ENCODE measurements at regions of chr10 and their contacts with region 1.

Region 1: DNA sequence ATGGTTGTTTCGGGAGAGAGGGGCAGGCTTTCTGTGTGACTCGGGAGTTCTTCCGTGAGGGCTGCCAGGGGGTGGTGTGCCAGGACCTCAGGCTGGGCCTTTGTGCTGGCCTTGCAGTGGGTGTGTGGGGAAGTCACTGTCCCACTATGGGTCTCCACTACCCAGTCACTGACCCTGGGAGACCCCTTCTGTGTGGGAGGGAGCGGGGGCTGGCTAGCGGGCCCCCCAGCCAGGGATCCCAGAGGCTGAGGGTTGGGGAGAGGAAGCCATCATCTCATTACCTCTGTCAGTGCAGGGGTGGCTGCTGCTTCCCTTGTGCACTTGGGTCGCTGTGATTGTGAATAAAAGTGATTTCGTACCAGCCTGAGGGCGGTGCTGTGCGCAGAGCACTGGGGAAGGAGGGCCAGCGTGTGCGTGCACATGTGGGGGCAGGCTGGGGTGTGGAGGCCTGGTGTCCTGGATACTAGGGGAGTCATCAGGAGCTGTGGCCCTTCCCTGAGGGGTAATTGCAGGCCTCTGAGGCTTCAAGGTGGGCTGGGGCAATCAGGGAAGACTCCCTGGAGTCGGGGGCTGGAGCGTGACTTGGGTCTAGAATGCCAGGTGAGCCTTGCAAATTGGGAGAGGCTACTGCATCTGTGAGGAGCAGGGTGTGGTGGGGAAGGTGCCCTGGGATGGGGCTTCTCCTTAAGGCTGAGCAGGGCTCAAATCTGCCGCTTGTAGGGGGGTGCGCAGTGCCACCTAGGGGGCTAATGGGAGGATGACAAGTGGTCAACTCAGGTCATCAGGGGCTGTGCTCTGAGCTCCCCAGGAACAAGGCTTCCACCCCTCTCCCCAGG is 98.9 kb downstream of the NEURL1 start:
- DNase-seq: peak; percentile 57
- ATAC-seq: peak; percentile 77
- H3K4me3 ChIP-seq: no peak overlapping the region
- H3K4me3 Mint-ChIP-seq: no peak overlapping the region
- H3K27ac ChIP-seq: no peak overlapping the region
- H3K27ac Mint-ChIP-seq: no peak overlapping the region
- H3K4me1 ChIP-seq: no peaks in the 10 kb centered on the region
- H3K4me1 Mint-ChIP-seq: no peaks in the 10 kb centered on the region
- H3K27me3 ChIP-seq: no peaks in the 10 kb centered on the region
- H3K27me3 Mint-ChIP-seq: no peaks in the 10 kb centered on the region
- CTCF ChIP-seq: peak; percentile 73

Region 2: GRCh38 chr10:103353281-103353680 is 239.1 kb before region 1 on chr10:
- CTCF ChIA-PET with region 1: no interaction called
- POLR2A ChIA-PET with region 1: no interaction called
- intact Hi-C with region 1: no loop called
- DNase-seq: no peak
- ATAC-seq: no peak
- H3K4me3 ChIP-seq: no peak overlapping the region
- H3K4me3 Mint-ChIP-seq: no peak overlapping the region
- H3K27ac ChIP-seq: no peak overlapping the region
- H3K27ac Mint-ChIP-seq: no peak overlapping the region
- H3K4me1 ChIP-seq: peaks cover 9 to 13% of the 10 kb centered on the region in 2 donors
- H3K4me1 Mint-ChIP-seq: peaks cover 6% of the 10 kb centered on the region
- H3K27me3 ChIP-seq: no peaks in the 10 kb centered on the region
- H3K27me3 Mint-ChIP-seq: no peaks in the 10 kb centered on the region
- CTCF ChIP-seq: no peak

Region 3: DNA sequence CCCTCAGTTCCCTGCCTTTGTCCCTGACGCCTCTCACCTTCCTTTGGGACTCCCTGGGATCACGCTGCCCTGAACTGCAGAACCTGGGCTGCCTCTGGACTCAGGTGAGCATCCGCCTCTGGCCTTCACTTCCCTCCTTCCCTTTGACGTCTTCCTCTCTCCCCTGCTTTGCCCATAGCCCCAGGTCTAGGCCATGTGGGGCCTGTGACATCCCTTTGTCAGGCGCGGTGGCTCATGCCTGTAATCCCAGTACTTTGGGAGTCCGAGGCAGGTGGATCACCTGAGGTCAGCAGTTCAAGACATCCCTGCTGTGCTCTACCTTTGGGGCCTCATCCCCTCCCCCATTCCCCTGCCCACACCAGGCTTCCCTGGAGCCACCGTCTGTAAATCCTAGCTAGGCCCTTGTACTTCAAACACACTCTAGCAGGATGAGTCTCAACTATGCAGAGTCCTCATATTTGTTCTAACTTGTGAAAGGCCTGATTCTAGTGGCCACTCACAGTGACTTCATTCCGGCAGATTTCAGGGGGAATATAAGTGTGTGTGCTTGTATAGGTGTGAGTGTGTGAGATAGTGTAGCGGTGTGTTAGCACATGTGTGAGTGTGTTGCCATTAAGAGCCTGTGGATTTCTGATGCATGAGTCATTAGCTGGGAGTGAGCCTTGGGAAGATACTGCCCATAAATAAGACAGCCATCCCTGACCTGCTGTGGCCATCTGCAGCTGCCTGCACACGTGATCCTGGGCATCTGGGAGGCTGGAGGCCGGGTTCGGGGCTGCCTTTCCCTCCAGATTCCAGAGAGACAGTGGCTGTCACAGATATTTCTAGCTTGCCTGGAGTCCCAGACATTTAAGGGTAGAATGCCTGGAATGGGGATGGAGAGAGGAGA is 100.7 kb before region 1 on chr10:
- CTCF ChIA-PET with region 1: interaction called, 6 read pairs
- POLR2A ChIA-PET with region 1: no interaction called
- intact Hi-C with region 1: loop called (anchors 5 kb)
- DNase-seq: no peak
- ATAC-seq: no peak
- H3K4me3 ChIP-seq: no peak overlapping the region
- H3K4me3 Mint-ChIP-seq: peak overlapping the region; percentile 50
- H3K27ac ChIP-seq: no peak overlapping the region
- H3K27ac Mint-ChIP-seq: peak overlapping the region; percentile 42
- H3K4me1 ChIP-seq: peaks cover 25 to 26% of the 10 kb centered on the region in 2 donors
- H3K4me1 Mint-ChIP-seq: peaks cover 34% of the 10 kb centered on the region
- H3K27me3 ChIP-seq: peaks cover 0 to 34% (median 24%) of the 10 kb centered on the region in 4 experiments
- H3K27me3 Mint-ChIP-seq: peaks cover 40% of the 10 kb centered on the region
- CTCF ChIP-seq: no peak

Measured in B cell (primary cell).